Activated B cell treated with CpG ODN at 0.5 μM for 24 hours (primary cell): ENCODE measurements at regions of chr6 and their contacts with region 1.

Region 1: GRCh38 chr6:104525677-104526312 is 333.9 kb downstream of the HACE1 start:
- DNase-seq: peak; percentile 19
- ATAC-seq: peak; percentile 90
- H3K4me3 Mint-ChIP-seq: no peak overlapping the region
- H3K27ac Mint-ChIP-seq: no peak overlapping the region
- H3K4me1 Mint-ChIP-seq: no peaks in the 10 kb centered on the region
- H3K27me3 Mint-ChIP-seq: no peaks in the 10 kb centered on the region
- CTCF ChIP-seq: peak; percentile 89

Region 2: DNA sequence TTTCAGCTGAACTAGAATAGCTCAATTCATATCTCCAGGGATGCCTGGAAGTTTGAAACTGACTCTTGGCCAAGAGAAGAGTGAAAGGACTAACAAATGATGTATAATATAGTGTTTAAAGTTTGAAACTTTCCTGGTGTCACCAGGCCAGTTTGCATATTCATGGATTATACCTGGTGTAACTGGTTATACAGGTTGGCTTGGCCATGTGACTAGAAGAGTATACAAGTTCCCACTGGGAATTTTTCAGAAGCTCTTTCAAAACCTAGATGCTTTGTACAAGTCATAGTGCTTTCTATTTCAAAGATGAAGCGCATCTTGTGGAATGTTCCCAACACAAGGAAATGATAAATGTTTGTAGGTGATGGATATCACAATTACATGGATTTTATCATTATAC is 1712.3 kb before region 1 on chr6:
- CTCF ChIA-PET with region 1: no interaction called
- POLR2A ChIA-PET with region 1: no interaction called
- intact Hi-C with region 1: no loop called
- DNase-seq: no peak
- ATAC-seq: no peak
- H3K4me3 Mint-ChIP-seq: no peak overlapping the region
- H3K27ac Mint-ChIP-seq: no peak overlapping the region
- H3K4me1 Mint-ChIP-seq: no peaks in the 10 kb centered on the region
- H3K27me3 Mint-ChIP-seq: no peaks in the 10 kb centered on the region
- CTCF ChIP-seq: no peak

Region 3: DNA sequence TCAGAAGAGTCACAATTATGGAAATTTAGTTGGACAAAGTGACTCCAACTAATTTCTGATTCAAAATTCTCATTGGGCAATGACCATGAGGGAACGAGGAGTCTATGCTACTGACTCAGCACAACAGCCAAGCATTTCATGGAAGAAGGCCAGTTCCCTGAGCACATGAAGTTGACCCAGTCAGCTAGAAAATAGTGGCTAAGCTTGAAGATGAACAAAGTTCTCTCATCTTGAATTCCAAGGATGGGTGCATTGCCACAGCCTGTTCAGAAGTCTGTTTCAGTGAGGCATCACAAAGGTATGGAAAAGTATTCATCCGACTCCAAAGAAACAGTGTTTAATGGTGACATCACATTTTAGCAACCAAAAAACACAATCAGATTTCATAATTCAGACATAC is 343.0 kb before region 1 on chr6:
- CTCF ChIA-PET with region 1: no interaction called
- POLR2A ChIA-PET with region 1: no interaction called
- intact Hi-C with region 1: no loop called
- DNase-seq: no peak
- ATAC-seq: no peak
- H3K4me3 Mint-ChIP-seq: no peak overlapping the region
- H3K27ac Mint-ChIP-seq: no peak overlapping the region
- H3K4me1 Mint-ChIP-seq: no peaks in the 10 kb centered on the region
- H3K27me3 Mint-ChIP-seq: no peaks in the 10 kb centered on the region
- CTCF ChIP-seq: no peak

Region 4: DNA sequence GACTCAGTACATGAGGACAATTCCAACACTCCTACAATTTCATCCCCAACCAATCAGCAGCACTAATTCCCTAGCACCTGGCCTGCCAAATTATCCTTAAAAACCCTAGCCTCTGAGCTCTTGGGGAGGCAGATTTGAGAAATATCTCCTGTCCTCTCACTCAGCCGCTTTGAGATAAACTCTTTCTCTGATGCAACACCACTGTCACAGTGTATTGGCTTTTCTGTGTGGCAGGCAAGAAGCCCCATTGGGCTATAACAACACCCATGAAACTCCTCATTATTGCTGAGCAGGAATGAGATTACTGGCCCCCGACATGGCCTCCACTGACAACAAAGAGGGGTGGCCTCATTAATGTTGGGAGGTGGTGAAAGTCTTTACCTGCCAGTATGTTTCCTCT is 181.6 kb before region 1 on chr6:
- CTCF ChIA-PET with region 1: no interaction called
- POLR2A ChIA-PET with region 1: no interaction called
- intact Hi-C with region 1: no loop called
- DNase-seq: no peak
- ATAC-seq: no peak
- H3K4me3 Mint-ChIP-seq: no peak overlapping the region
- H3K27ac Mint-ChIP-seq: no peak overlapping the region
- H3K4me1 Mint-ChIP-seq: no peaks in the 10 kb centered on the region
- H3K27me3 Mint-ChIP-seq: no peaks in the 10 kb centered on the region
- CTCF ChIP-seq: no peak

Region 5: DNA sequence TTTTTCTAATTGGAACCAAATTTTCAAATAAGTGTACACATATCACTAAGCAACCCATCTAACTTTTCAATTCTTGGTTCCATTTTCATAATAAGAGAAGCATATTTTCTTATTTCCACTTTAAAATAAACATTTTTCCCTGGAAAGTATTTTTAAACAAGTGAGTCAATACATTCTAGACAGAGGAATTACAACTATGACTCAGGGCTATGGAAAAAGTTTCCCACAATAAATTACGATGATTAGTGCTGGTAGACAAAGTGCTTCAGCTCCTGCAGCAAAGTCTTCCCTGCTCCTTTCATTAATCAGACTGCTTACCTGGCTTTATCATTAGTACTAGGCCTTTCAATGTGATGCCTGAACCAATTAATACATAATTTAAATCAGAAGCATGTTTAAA is 11.4 kb after region 1 on chr6:
- CTCF ChIA-PET with region 1: interaction called, 15 read pairs
- POLR2A ChIA-PET with region 1: no interaction called
- intact Hi-C with region 1: no loop called
- DNase-seq: no peak
- ATAC-seq: no peak
- H3K4me3 Mint-ChIP-seq: no peak overlapping the region
- H3K27ac Mint-ChIP-seq: no peak overlapping the region
- H3K4me1 Mint-ChIP-seq: no peaks in the 10 kb centered on the region
- H3K27me3 Mint-ChIP-seq: no peaks in the 10 kb centered on the region
- CTCF ChIP-seq: no peak